ENCODE measurements at regions of chr12 and their contacts with region 1.

Region 1: GRCh38 chr12:49188914-49189367 is at the start of gene TUBA1A:
- DNase-seq: peak; percentile 99
- H3K4me3 ChIP-seq: peak within 1 kb of the TSS; percentile 94
- H3K27ac ChIP-seq: peak within 1 kb of the TSS; percentile 94
- H3K27me3 ChIP-seq: no peaks in the 10 kb centered on the region
- CTCF ChIP-seq: no peak
- polyA plus RNA-seq, gene TUBA1A: 1,918 and 2,457 TPM in 2 replicates

Region 2: GRCh38 chr12:48838048-48838447 is 350.9 kb before region 1 on chr12:
- CTCF ChIA-PET with region 1: no interaction called
- POLR2A ChIA-PET with region 1: no interaction called
- DNase-seq: no peak
- H3K4me3 ChIP-seq: no peak overlapping the region
- H3K27ac ChIP-seq: no peak overlapping the region
- H3K27me3 ChIP-seq: no peaks in the 10 kb centered on the region
- CTCF ChIP-seq: no peak

Region 3: DNA sequence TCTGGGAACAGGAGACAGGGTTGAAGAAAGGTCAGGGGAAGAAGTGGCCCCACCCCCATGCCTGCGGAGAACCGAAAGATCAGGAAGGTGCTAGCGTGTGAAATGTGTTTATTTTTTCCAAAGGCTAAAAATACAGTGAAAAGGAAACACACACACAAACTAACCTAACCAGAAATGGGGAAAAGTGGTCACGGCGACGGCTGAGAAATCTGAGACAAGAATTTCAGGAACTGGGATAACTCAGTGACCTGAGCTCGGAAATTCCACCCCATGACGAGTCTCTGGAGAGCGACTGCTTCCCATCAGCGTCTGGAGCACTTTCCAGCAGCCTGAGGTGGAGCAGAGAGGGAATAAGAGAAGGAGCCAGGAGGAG is 306.6 kb before region 1 on chr12:
- CTCF ChIA-PET with region 1: no interaction called
- POLR2A ChIA-PET with region 1: no interaction called
- DNase-seq: no peak
- H3K4me3 ChIP-seq: peak overlapping the region; percentile 27
- H3K27ac ChIP-seq: no peak overlapping the region
- H3K27me3 ChIP-seq: peaks cover 20% of the 10 kb centered on the region
- CTCF ChIP-seq: no peak

Region 4: GRCh38 chr12:49219417-49220026 is 30.6 kb after region 1 on chr12:
- CTCF ChIA-PET with region 1: interaction called, 9 read pairs
- POLR2A ChIA-PET with region 1: interaction called, 49 read pairs
- DNase-seq: no peak
- H3K4me3 ChIP-seq: no peak overlapping the region
- H3K27ac ChIP-seq: no peak overlapping the region
- H3K27me3 ChIP-seq: no peaks in the 10 kb centered on the region
- CTCF ChIP-seq: no peak

Region 5: DNA sequence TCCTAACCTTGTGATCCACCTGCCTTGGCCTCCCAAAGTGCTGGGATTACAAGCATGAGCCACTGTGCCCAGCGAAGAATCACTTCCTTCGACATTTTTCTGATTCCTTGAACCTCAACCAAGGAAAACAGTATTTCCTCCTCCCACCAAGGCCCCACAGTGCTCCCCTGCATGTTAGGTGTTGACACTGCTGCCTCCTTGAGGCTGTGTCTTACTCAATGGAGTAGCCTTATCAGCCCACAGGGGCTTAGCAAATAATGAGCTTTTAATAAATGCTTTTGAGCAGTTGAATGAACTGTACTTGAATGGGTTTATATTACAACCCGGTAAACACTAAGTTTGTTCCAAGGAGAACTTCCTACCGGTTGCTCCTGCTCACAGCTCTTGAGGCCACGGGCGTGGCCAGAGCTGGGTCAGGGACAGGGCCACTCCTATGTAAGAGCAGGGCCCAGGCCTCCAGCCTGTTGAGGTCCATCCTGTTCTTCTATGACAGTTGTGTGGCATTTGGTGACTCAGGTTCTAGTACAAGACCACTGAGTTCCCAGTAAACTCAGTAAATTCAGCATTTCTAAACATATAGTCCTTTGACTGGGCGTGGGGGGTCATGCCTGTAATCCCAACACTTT is 36.7 kb after region 1 on chr12:
- CTCF ChIA-PET with region 1: interaction called, 9 read pairs
- POLR2A ChIA-PET with region 1: interaction called, 49 read pairs
- DNase-seq: no peak
- H3K4me3 ChIP-seq: no peak overlapping the region
- H3K27ac ChIP-seq: no peak overlapping the region
- H3K27me3 ChIP-seq: no peaks in the 10 kb centered on the region
- CTCF ChIP-seq: peak; percentile 25; the same call in 1 of the 2 replicates

Region 6: DNA sequence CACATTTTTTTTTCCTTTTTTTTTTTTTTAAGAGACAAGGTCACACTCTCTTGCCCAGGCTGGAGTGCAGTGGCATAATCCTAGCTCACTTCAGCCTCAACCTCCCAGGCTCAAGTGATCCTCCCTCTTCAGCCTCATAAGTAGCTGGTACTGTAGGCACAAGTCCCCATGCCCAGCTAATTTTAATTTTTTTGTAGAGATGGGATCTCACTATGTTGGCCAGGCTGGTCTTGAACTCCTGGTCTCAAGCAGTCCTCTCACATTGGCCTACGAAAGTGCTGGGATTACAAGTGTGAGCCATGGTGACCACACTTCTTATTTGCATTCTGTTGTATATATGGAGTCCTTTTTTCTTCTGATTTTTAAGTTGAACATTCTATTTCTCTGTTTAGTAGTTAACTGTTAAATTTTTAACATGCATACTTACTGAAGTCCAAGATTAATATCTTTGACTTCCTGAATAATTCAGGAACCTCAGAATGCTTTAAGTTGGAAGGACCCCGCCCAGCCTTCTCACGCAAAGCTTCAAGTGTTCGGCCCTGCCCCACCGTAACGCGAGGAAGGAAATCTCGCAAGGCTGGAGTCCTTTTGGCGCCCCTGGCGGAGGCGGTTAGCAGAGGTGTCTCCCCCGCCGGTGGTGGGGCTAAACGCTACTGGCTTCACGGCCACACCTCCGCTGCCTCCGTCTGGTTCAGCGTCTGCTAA is 199.9 kb after region 1 on chr12:
- CTCF ChIA-PET with region 1: no interaction called
- POLR2A ChIA-PET with region 1: no interaction called
- DNase-seq: no peak
- H3K4me3 ChIP-seq: no peak overlapping the region
- H3K27ac ChIP-seq: no peak overlapping the region
- H3K27me3 ChIP-seq: no peaks in the 10 kb centered on the region
- CTCF ChIP-seq: no peak

Measured in AG04450 (cell line).